SK-N-SH (cell line): ENCODE measurements at regions of chr7 and their contacts with region 1.

Region 1: GRCh38 chr7:154927624-154928143 is 75.2 kb downstream of the PAXIP1 start:
- DNase-seq: peak; percentile 68
- H3K4me3 ChIP-seq: peak overlapping the region; percentile 61 to 70
- H3K27ac ChIP-seq: peak overlapping the region in 1 of 2 experiments; percentile 44; a peak in 1 of 4 replicates
- H3K4me1 ChIP-seq: peaks cover 0 to 5% of the 10 kb centered on the region in 2 experiments; a peak in 1 of 4 replicates
- H3K27me3 ChIP-seq: no peaks in the 10 kb centered on the region
- CTCF ChIP-seq: peak; percentile 97
- EP300 ChIP-seq: no peak
- RAD21 ChIP-seq: peak; percentile 96

Region 2: GRCh38 chr7:154656618-154657017 is 271.1 kb before region 1 on chr7:
- CTCF ChIA-PET with region 1: no interaction called
- POLR2A ChIA-PET with region 1: no interaction called
- DNase-seq: no peak
- H3K4me3 ChIP-seq: no peak overlapping the region
- H3K27ac ChIP-seq: no peak overlapping the region
- H3K4me1 ChIP-seq: no peaks in the 10 kb centered on the region
- H3K27me3 ChIP-seq: no peaks in the 10 kb centered on the region
- CTCF ChIP-seq: no peak
- EP300 ChIP-seq: no peak
- RAD21 ChIP-seq: no peak

Region 3: DNA sequence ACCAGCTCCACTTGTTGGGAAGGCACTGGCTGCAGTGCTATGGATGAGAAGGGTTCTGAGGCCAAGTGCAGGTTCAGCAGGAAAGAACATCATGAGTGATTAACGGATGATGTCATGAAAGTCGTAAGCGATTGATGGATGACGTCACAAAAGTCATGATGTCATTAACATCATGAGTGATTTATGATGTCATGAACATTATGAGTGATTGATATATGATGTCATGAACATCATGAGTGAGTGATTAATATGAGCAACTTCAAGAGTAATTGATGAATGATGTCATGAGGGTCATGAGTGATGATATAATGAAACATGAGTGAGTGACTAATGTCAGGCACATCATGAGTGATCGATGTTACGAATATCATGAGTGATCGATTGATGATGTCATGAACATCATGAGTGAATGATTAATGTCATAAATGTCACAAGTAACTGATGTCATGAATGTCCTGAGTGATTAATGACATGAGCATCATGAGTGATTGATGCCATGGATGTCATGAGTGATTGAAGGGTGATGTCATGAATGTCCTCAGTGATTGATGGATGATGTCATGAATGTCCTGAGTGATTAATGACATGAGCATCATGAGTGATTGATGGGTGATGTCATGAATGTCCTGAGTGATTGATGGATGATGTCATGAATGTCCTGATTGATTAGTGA is 110.3 kb before region 1 on chr7:
- CTCF ChIA-PET with region 1: interaction called, 11 read pairs
- POLR2A ChIA-PET with region 1: no interaction called
- DNase-seq: no peak
- H3K4me3 ChIP-seq: no peak overlapping the region; a peak in 1 of 4 replicates
- H3K27ac ChIP-seq: no peak overlapping the region
- H3K4me1 ChIP-seq: no peaks in the 10 kb centered on the region
- H3K27me3 ChIP-seq: no peaks in the 10 kb centered on the region
- CTCF ChIP-seq: no peak
- EP300 ChIP-seq: no peak
- RAD21 ChIP-seq: no peak

Region 4: GRCh38 chr7:154841731-154842331 is 85.9 kb before region 1 on chr7:
- CTCF ChIA-PET with region 1: interaction called, 14 read pairs
- POLR2A ChIA-PET with region 1: no interaction called
- DNase-seq: peak; percentile 83
- H3K4me3 ChIP-seq: peak overlapping the region in 1 of 2 experiments; percentile 12; a peak in 1 of 4 replicates
- H3K27ac ChIP-seq: peak overlapping the region in 1 of 2 experiments; percentile 98; a peak in 2 of 4 replicates
- H3K4me1 ChIP-seq: peaks cover 0 to 30% of the 10 kb centered on the region in 2 experiments; a peak in 2 of 4 replicates
- H3K27me3 ChIP-seq: no peaks in the 10 kb centered on the region
- CTCF ChIP-seq: no peak
- EP300 ChIP-seq: peak in 1 of 2 experiments; percentile 87; a peak in 2 of 4 replicates
- RAD21 ChIP-seq: peak; percentile 11; the same call in 1 of the 2 replicates

Region 5: GRCh38 chr7:154913638-154914312 is 13.9 kb before region 1 on chr7:
- CTCF ChIA-PET with region 1: interaction called, 91 read pairs
- POLR2A ChIA-PET with region 1: interaction called, 3 read pairs
- DNase-seq: peak; percentile 96
- H3K4me3 ChIP-seq: peak overlapping the region in 1 of 2 experiments; percentile 6; a peak in 1 of 4 replicates
- H3K27ac ChIP-seq: no peak overlapping the region
- H3K4me1 ChIP-seq: no peaks in the 10 kb centered on the region
- H3K27me3 ChIP-seq: no peaks in the 10 kb centered on the region
- CTCF ChIP-seq: peak; percentile 80
- EP300 ChIP-seq: no peak
- RAD21 ChIP-seq: peak; percentile 88

Region 6: GRCh38 chr7:154975984-154976383 is 48.3 kb after region 1 on chr7:
- CTCF ChIA-PET with region 1: interaction called, 16 read pairs
- POLR2A ChIA-PET with region 1: no interaction called
- DNase-seq: no peak
- H3K4me3 ChIP-seq: no peak overlapping the region
- H3K27ac ChIP-seq: no peak overlapping the region
- H3K4me1 ChIP-seq: no peaks in the 10 kb centered on the region
- H3K27me3 ChIP-seq: no peaks in the 10 kb centered on the region
- CTCF ChIP-seq: no peak
- EP300 ChIP-seq: no peak
- RAD21 ChIP-seq: no peak

Region 7: GRCh38 chr7:155009570-155010157 is 82.0 kb after region 1 on chr7:
- CTCF ChIA-PET with region 1: interaction called, 20 read pairs
- POLR2A ChIA-PET with region 1: no interaction called
- DNase-seq: peak; percentile 37
- H3K4me3 ChIP-seq: 0 out of 4 replicates have a peak overlapping the region, but pooled peaks of 1 of the 2 experiments have one; percentile 30
- H3K27ac ChIP-seq: no peak overlapping the region
- H3K4me1 ChIP-seq: no peaks in the 10 kb centered on the region; a peak in 1 of 4 replicates
- H3K27me3 ChIP-seq: no peaks in the 10 kb centered on the region
- CTCF ChIP-seq: peak; percentile 67
- EP300 ChIP-seq: no peak
- RAD21 ChIP-seq: no peak

Region 8: DNA sequence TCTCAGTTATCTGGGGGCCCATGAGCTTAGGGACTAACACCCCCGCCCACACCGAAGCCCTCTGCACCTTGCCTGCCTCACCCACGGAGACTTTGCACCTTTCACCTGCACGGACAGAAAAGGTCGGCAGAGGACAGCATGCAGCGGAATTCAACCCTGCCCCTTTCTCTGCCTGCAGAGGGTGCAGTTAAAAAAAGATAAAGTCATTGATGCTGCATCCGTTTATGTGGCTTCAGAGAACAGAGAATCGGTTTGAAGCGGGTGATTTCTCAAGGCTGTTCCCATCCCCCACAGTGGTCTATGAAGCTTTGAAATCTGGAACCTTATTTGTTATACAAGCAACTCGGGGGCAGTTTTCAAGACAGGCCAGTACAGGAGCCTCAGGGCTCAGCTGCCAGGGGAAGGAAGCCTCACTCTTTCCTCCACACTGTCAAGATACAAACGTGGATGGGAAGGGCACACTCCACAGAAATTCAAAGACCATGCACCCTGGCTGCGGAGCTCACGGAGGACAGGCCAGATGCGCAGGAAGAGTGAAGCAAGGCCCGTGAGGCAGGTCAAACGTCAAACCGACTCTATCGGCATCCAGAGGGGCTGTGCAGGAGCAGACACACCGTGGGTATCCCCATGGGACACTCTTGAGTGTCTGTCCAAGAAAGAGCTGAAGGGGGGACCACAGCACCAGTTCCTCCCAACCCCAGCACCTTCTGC is 436.3 kb after region 1 on chr7:
- CTCF ChIA-PET with region 1: interaction called, 11 read pairs
- POLR2A ChIA-PET with region 1: no interaction called
- DNase-seq: no peak
- H3K4me3 ChIP-seq: no peak overlapping the region
- H3K27ac ChIP-seq: no peak overlapping the region
- H3K4me1 ChIP-seq: peaks cover 0 to 2% of the 10 kb centered on the region in 2 experiments; a peak in 1 of 4 replicates
- H3K27me3 ChIP-seq: peaks cover 60% of the 10 kb centered on the region
- CTCF ChIP-seq: no peak
- EP300 ChIP-seq: no peak
- RAD21 ChIP-seq: no peak